Naive thymus-derived CD4-positive, alpha-beta T cell (primary cell): ENCODE measurements at regions of chr10 and their contacts with region 1.

Region 1: GRCh38 chr10:129057856-129058663 is 409.0 kb upstream of the MGMT start:
- DNase-seq: peak in 8 of 9 donors; percentile 27 to 76 (median 56)
- ATAC-seq: peak; percentile 82
- H3K4me3 ChIP-seq: peak overlapping the region; percentile 36
- H3K4me3 Mint-ChIP-seq: peak overlapping the region; percentile 60 to 85 (median 76)
- H3K27ac ChIP-seq: no peak overlapping the region
- H3K27ac Mint-ChIP-seq: peak overlapping the region in 6 of 9 donors; percentile 50 to 80 (median 58)
- H3K4me1 ChIP-seq: peaks cover 5 to 39% of the 10 kb centered on the region in 2 donors
- H3K4me1 Mint-ChIP-seq: peaks cover 12 to 60% (median 47%) of the 10 kb centered on the region in 7 donors
- H3K27me3 ChIP-seq: no peaks in the 10 kb centered on the region
- H3K27me3 Mint-ChIP-seq: peaks cover 0 to 32% (median 0%) of the 10 kb centered on the region in 5 donors

Region 2: DNA sequence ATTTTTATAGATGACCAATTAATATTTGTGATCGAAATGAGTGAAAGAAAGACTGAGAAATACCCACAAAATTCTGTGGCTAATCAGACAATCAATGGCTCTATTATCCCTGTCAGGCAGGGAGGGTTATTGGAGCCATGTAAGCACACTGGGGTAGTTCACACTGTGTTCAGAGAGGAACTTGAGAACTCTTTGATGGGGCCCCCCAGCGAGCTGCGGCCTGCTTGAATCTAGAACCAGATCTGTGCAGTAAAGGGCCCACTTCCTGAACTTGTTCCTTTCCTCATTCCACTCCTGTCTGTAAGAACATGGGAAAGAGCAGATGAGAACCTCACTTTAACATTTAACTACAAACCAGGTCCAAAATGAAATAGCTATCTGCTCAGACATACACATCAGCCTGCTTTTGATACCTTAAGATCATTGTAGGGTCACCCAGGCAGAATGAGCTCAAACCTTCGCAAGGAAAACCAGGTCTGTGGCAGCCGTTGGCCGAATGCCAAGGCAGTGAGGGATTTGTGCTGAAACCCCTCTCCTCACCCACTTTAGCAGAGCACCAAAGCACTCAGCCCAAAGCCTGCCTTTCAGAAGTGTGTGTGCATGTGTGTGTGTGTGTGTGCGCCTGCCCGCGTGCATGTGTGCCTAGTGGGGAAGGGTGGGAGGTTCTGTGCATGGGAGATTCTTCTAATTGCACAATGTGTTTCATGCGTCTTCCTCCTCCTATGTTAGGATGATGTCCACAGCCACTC is 43.3 kb after region 1 on chr10:
- CTCF ChIA-PET with region 1: no interaction called
- POLR2A ChIA-PET with region 1: no interaction called
- intact Hi-C with region 1: loop called in 1 of 2 experiments (anchors 5 kb)
- DNase-seq: peak in 4 of 9 donors; percentile 10 to 35 (median 20)
- ATAC-seq: no peak
- H3K4me3 ChIP-seq: no peak overlapping the region
- H3K4me3 Mint-ChIP-seq: peak overlapping the region in 7 of 10 donors; percentile 8 to 58 (median 30)
- H3K27ac ChIP-seq: no peak overlapping the region
- H3K27ac Mint-ChIP-seq: peak overlapping the region in 7 of 9 donors; percentile 7 to 88 (median 67)
- H3K4me1 ChIP-seq: peaks cover 0 to 39% of the 10 kb centered on the region in 2 donors
- H3K4me1 Mint-ChIP-seq: peaks cover 6 to 66% (median 55%) of the 10 kb centered on the region in 7 donors
- H3K27me3 ChIP-seq: no peaks in the 10 kb centered on the region
- H3K27me3 Mint-ChIP-seq: no peaks in the 10 kb centered on the region